ENCODE measurements at regions of chr11 and their contacts with region 1.

Region 1: GRCh38 chr11:46346886-46347636 is at the start of gene DGKZ:
- DNase-seq: no peak
- H3K4me3 ChIP-seq: peak within 1 kb of the TSS; percentile 90
- CTCF ChIP-seq: peak; percentile 62

Region 2: GRCh38 chr11:46332568-46333393 is 14.3 kb before region 1 on chr11:
- CTCF ChIA-PET with region 1: interaction called, 16 read pairs
- POLR2A ChIA-PET with region 1: interaction called, 3 read pairs
- DNase-seq: no peak
- H3K4me3 ChIP-seq: peak overlapping the region; percentile 38
- CTCF ChIP-seq: no peak

Region 3: DNA sequence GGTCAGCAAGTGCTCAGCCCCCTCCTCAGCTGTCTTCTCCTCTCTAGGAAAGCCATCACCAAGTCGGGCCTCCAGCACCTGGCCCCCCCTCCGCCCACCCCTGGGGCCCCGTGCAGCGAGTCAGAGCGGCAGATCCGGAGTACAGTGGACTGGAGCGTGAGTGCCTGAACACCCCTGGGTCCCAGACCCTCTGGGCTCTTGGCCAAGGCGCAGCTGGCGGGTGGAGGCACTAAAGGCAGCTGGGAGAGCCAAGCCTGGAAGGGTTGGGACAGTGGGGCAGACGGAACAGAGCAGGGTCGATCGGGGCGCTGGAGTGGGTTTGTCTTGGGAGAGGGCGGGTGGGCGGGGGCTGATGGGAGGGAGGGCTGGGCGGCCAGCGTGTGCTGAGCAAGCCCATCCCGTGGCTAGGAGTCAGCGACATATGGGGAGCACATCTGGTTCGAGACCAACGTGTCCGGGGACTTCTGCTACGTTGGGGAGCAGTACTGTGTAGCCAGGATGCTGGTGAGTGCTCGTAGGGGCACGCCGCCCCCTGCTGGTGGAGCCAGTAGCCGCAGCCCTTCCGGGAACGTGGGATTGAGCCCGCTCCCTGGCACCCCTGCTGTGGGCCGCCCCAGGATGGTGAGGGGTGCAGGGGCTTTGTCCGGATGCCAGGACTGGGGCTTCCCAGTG is 20.3 kb after region 1 on chr11:
- CTCF ChIA-PET with region 1: interaction called, 498 read pairs
- POLR2A ChIA-PET with region 1: no interaction called
- DNase-seq: no peak
- H3K4me3 ChIP-seq: no peak overlapping the region
- CTCF ChIP-seq: peak; percentile 89

Region 4: GRCh38 chr11:46649180-46649738 is 302.2 kb after region 1 on chr11:
- CTCF ChIA-PET with region 1: no interaction called
- POLR2A ChIA-PET with region 1: no interaction called
- DNase-seq: peak; percentile 85
- H3K4me3 ChIP-seq: no peak overlapping the region
- CTCF ChIP-seq: no peak